Activated B cell treated with CpG ODN at 0.5 μM for 24 hours (primary cell): ENCODE measurements at regions of chr12 and their contacts with region 1.

Region 1: GRCh38 chr12:103965590-103966504 is at the start of gene TDG:
- DNase-seq: peak; percentile 85
- ATAC-seq: peak; percentile 95
- H3K4me3 Mint-ChIP-seq: peak within 1 kb of the TSS; percentile 97
- H3K27ac Mint-ChIP-seq: peak within 1 kb of the TSS; percentile 97
- H3K4me1 Mint-ChIP-seq: peaks cover 56% of the 10 kb centered on the region
- H3K27me3 Mint-ChIP-seq: no peaks in the 10 kb centered on the region
- CTCF ChIP-seq: no peak
- total RNA-seq, gene TDG: 31.5 and 34.2 TPM in 2 replicates

Region 2: GRCh38 chr12:103840876-103841689 is 124.8 kb before region 1 on chr12 and contains the start of gene NT5DC3:
- CTCF ChIA-PET with region 1: no interaction called
- POLR2A ChIA-PET with region 1: interaction called, 17 read pairs
- intact Hi-C with region 1: no loop called
- DNase-seq: peak; percentile 83
- ATAC-seq: peak; percentile 91
- H3K4me3 Mint-ChIP-seq: peak within 1 kb of the TSS; percentile 89
- H3K27ac Mint-ChIP-seq: peak within 1 kb of the TSS; percentile 84
- H3K4me1 Mint-ChIP-seq: peaks cover 32% of the 10 kb centered on the region
- H3K27me3 Mint-ChIP-seq: no peaks in the 10 kb centered on the region
- CTCF ChIP-seq: no peak
- total RNA-seq, gene NT5DC3: 11.6 and 12.4 TPM in 2 replicates

Region 3: DNA sequence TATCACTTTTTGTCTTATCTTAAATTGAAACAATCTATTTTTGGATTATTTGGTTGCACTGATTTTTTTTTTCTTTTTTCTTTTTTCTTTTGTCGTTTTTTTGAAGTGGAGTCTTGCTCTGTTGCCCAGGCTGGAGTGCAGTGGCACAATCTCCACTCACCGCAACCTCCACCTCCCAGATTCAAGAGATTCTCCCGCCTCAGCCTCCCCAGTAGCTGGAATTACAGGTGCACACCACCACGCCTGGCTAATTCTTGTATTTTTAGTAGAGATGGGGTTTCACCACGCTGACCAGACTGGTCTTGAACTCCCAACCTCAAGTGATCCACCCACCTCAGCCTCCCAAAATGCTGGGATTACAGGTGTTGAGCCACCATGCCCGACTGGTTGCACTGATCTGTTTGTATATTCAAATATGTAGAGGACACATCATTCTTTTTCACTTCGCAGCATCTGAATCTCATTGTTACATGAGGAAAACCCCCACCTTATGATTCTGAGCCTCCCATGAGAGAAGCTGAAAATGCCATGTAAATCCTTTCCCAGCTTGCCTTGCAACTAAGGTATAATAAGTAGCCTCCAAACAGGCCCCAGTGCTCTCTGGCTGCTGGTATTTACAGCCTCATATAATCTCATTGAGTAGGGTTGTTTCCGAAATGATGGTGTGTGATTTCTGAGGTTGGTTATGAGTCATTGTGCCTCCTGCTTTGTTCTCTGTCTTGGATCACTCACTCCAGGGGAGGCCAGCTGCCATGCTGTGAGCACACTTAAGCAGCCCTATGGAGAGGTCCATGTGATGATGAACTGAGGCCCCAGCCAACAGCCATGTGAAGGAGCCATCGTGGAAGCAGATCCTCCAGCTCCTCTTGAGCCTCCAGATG is 40.8 kb before region 1 on chr12:
- CTCF ChIA-PET with region 1: interaction called, 6 read pairs
- POLR2A ChIA-PET with region 1: interaction called, 151 read pairs
- intact Hi-C with region 1: loop called (anchors 1 kb)
- DNase-seq: peak; percentile 22
- ATAC-seq: peak; percentile 6
- H3K4me3 Mint-ChIP-seq: peak overlapping the region; percentile 50
- H3K27ac Mint-ChIP-seq: peak overlapping the region; percentile 79
- H3K4me1 Mint-ChIP-seq: peaks cover 40% of the 10 kb centered on the region
- H3K27me3 Mint-ChIP-seq: no peaks in the 10 kb centered on the region
- CTCF ChIP-seq: no peak

Region 4: DNA sequence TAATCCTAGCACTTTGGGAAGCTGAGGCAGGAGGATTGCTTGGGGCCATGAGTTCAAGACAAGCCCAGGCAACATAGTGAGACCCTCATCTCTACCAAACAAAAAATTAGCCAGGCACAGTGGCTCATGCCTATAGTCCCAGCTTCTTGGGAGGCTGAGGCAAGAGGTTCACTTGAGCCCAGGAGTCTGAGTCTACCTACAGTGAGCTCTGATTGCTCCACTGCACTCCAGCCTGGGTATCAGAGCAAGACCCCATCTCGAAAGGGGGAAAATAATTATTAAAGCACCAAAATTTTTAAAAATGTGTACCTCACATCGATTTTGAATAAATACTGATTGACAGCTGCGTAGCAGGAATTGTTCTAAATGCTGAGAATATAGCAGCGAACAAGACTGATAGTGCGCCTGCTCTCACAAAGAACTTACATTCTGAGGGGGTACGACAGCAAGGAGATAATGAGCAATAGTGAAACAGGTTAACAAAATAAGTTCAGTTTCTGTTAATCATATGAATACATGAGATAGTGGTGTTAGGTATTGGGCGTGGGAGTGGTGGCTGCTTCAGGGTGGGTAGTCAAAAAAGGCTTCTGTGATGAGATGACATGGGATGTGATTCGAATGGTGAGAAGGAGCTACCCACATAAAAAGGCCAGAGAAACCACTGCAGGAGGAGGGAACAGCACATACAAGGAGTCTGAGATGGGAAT is 118.1 kb after region 1 on chr12:
- CTCF ChIA-PET with region 1: no interaction called
- POLR2A ChIA-PET with region 1: no interaction called
- intact Hi-C with region 1: no loop called
- DNase-seq: no peak
- ATAC-seq: no peak
- H3K4me3 Mint-ChIP-seq: no peak overlapping the region
- H3K27ac Mint-ChIP-seq: no peak overlapping the region
- H3K4me1 Mint-ChIP-seq: no peaks in the 10 kb centered on the region
- H3K27me3 Mint-ChIP-seq: no peaks in the 10 kb centered on the region
- CTCF ChIP-seq: no peak

Region 5: DNA sequence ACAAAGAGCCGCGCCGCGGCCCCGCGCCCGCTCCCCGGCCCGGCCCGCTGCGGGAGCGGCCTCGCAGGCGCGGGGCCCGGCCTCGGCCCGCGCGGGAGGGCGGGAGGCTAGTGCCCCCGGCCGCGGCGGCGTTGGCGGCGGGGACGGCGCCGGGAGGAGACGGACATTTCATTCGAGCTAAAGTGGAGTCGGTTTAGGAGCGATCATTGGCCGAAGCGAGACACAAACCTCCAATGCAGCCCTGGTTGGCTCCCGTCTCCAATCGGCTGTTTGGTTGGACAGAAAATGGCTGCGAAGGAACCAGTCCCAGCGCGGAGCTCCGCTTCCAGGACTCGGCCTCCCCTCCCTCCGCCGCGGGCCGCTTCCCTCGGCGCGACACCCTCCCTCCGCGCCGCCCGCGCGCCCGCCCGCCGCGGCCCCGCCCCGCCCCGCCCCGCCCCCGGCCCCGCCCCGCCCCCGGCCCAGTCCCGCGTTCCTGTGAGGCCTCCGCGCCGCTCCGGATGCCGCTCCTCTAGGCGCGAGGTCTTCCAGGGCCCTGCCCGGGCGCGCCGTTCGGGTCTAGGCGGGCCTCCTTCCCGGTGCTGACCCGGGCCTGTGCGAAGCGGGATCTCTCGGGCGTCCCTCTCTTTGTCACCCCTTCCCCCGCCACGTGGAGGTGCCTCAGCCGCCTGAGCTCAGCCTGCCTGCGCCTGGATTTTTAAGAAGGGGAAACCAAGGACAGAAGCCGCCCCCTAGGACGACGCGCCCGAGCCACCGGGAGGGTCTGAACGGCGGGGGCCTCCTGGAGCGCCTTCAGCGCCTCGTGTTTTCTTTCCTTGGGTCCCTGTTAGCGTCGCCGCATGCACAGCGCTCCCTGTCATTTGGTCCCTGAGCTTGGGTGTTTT is 172.3 kb after region 1 on chr12 and contains the start of gene NFYB:
- CTCF ChIA-PET with region 1: no interaction called
- POLR2A ChIA-PET with region 1: interaction called, 18 read pairs
- intact Hi-C with region 1: no loop called
- DNase-seq: peak; percentile 90
- ATAC-seq: peak; percentile 94
- H3K4me3 Mint-ChIP-seq: peak within 1 kb of the TSS; percentile 89
- H3K27ac Mint-ChIP-seq: peak within 1 kb of the TSS; percentile 85
- H3K4me1 Mint-ChIP-seq: peaks cover 21% of the 10 kb centered on the region
- H3K27me3 Mint-ChIP-seq: no peaks in the 10 kb centered on the region
- CTCF ChIP-seq: no peak
- total RNA-seq, gene NFYB: 17.0 and 17.1 TPM in 2 replicates